GM12878 (cell line): ENCODE measurements at regions of chr14 and their contacts with region 1.

Region 1: GRCh38 chr14:74945823-74946682 is 9.3 kb downstream of the PGF start:
- DNase-seq: no peak
- ATAC-seq: peak; percentile 84
- H3K4me3 ChIP-seq: no peak overlapping the region
- H3K27ac ChIP-seq: no peak overlapping the region
- H3K4me1 ChIP-seq: peaks cover 23% of the 10 kb centered on the region
- H3K27me3 ChIP-seq: no peaks in the 10 kb centered on the region
- CTCF ChIP-seq: peak; percentile 90 to 96 (median 94)
- EP300 ChIP-seq: no peak
- POLR2A ChIP-seq: no peak
- RAD21 ChIP-seq: peak; percentile 87

Region 2: DNA sequence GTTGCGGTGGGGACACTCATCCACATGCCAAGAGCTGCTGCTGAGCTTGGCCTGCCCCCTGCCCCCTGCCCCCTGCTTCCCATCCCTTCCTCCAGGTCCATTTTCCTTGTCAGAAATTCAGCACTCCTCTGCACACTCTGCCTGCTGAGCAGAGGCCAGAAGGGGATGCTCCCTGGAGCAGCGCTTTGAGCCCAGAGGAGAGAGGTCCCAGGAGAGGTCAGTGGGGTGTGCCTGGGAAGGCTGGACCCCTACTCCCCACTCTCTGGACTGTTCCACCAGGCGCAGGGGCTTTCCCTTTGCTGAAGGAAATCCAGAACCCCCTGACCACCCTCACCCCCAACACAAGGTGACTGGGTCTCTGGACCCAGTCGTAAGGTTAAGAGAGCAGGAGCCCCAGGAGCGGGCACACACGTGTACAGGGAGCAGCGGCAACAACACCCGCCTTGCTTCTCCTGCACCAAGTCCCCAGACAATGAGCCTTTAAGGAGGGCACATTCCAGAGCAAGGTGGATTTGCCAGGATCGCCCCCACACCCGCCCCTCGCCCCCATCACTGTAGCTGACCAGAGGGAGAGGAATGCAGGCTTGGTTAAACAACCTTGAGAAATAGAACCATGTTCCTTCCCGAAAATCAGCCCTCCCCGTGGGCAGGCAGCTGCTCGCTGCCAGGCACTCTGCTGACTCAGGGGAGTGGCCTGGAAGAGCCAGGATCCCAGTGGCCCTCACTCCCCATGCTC is 421.8 kb before region 1 on chr14:
- CTCF ChIA-PET with region 1: no interaction called
- POLR2A ChIA-PET with region 1: no interaction called
- RAD21 ChIA-PET with region 1: no interaction called
- SMC1A ChIA-PET with region 1: no interaction called
- in situ Hi-C with region 1: no loop called
- intact Hi-C with region 1: no loop called
- DNase-seq: no peak
- ATAC-seq: no peak
- H3K4me3 ChIP-seq: no peak overlapping the region
- H3K27ac ChIP-seq: no peak overlapping the region
- H3K4me1 ChIP-seq: peaks cover 5% of the 10 kb centered on the region
- H3K27me3 ChIP-seq: no peaks in the 10 kb centered on the region; a peak in 2 of 4 replicates
- CTCF ChIP-seq: no peak
- EP300 ChIP-seq: no peak
- POLR2A ChIP-seq: no peak
- RAD21 ChIP-seq: no peak

Region 3: DNA sequence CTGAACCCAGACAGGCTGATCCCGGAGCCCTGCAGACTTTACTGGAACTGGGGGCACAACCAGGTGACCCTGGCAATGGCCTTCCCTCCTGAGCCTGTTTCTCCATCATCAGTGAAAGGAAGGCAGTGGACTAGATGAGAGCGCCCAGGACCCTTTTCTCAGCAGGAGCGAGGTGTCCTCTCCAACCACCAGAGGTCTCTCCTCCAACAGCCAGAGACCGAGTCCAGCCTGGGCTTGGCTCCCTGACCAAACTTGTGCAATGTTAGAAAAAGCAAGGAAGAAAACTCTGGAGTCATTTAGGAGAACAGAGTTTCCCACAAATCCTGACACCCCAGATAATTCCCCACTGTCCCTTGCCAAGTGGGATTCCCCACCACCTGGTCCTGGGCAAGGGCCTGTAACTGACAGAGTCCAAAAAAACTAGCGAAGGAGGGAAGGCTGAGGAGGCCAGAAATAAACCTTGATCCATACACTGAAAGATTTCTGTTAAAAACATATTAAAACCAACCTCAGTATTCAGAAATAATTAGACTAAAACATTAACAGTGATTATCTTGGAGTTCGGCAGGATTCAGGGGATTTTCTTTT is 32.0 kb before region 1 on chr14:
- CTCF ChIA-PET with region 1: interaction called, 5 read pairs
- POLR2A ChIA-PET with region 1: no interaction called
- RAD21 ChIA-PET with region 1: interaction called, 8 read pairs
- SMC1A ChIA-PET with region 1: interaction called, 3 read pairs
- in situ Hi-C with region 1: no loop called
- intact Hi-C with region 1: loop called (anchors 1 kb)
- DNase-seq: no peak
- ATAC-seq: peak; percentile 88
- H3K4me3 ChIP-seq: no peak overlapping the region
- H3K27ac ChIP-seq: no peak overlapping the region
- H3K4me1 ChIP-seq: no peaks in the 10 kb centered on the region
- H3K27me3 ChIP-seq: no peaks in the 10 kb centered on the region
- CTCF ChIP-seq: peak; percentile 62 to 76 (median 70)
- EP300 ChIP-seq: no peak
- POLR2A ChIP-seq: no peak
- RAD21 ChIP-seq: peak; percentile 76

Region 4: GRCh38 chr14:74934476-74935359 is 11.3 kb before region 1 on chr14:
- CTCF ChIA-PET with region 1: interaction called, 10 read pairs
- POLR2A ChIA-PET with region 1: interaction called, 6 read pairs
- RAD21 ChIA-PET with region 1: interaction called, 5 read pairs
- SMC1A ChIA-PET with region 1: interaction called, 5 read pairs
- in situ Hi-C with region 1: no loop called
- intact Hi-C with region 1: no loop called
- DNase-seq: no peak
- ATAC-seq: peak; percentile 53
- H3K4me3 ChIP-seq: no peak overlapping the region
- H3K27ac ChIP-seq: no peak overlapping the region
- H3K4me1 ChIP-seq: peaks cover 19% of the 10 kb centered on the region
- H3K27me3 ChIP-seq: no peaks in the 10 kb centered on the region
- CTCF ChIP-seq: no peak
- EP300 ChIP-seq: no peak
- POLR2A ChIP-seq: no peak
- RAD21 ChIP-seq: no peak

Region 5: GRCh38 chr14:74963705-74964271 is 17.7 kb after region 1 on chr14:
- CTCF ChIA-PET with region 1: interaction called, 61 read pairs
- POLR2A ChIA-PET with region 1: interaction called, 3 read pairs
- RAD21 ChIA-PET with region 1: interaction called, 6 read pairs
- SMC1A ChIA-PET with region 1: interaction called, 4 read pairs
- in situ Hi-C with region 1: no loop called
- intact Hi-C with region 1: no loop called
- DNase-seq: no peak
- ATAC-seq: peak; percentile 15
- H3K4me3 ChIP-seq: no peak overlapping the region
- H3K27ac ChIP-seq: no peak overlapping the region
- H3K4me1 ChIP-seq: peaks cover 14% of the 10 kb centered on the region
- H3K27me3 ChIP-seq: no peaks in the 10 kb centered on the region
- CTCF ChIP-seq: no peak
- EP300 ChIP-seq: no peak
- POLR2A ChIP-seq: no peak
- RAD21 ChIP-seq: no peak

Region 6: DNA sequence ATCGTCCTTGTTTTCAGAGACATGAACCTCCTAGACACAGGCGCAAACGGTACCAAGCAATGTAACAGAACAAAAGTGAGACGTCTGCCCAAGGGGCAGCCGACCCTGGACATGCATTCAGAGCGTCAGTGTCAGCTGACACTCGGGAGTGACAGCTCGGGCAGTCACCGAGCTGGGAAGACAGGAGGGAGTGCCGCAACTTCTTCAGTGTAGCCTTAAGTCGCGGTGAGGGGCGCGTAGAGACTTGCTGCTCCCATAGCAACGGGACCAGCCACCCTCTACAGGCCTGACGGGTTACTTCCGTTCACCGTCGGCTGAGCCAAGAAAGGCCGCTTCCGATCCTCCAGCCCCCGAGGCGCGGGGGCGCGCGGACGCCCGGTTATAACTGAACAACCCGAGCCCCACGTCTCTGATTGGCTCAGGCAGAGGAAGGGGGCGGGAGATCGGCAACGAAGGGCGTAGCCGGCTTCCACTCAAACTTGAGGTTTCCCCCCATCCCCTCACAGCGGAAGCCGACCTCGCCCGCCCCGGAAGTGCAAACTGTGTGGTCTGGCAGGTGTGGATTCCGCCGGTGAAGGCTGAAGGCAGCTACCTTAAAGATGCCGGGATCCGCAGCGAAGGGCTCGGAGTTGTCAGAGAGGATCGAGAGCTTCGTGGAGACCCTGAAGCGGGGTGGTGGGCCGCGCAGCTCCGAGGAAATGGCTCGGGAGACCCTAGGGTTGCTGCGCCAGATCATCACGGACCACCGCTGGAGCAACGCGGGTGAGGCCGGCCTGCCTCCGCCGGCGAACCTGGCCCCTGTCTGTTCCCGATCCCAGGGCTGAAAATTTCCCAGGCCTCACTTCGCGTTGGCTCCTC is 56.6 kb after region 1 on chr14 and contains the start of gene EIF2B2:
- CTCF ChIA-PET with region 1: interaction called, 20 read pairs
- POLR2A ChIA-PET with region 1: interaction called, 6 read pairs
- RAD21 ChIA-PET with region 1: interaction called, 4 read pairs
- SMC1A ChIA-PET with region 1: interaction called, 4 read pairs
- in situ Hi-C with region 1: no loop called
- intact Hi-C with region 1: loop called (anchors 1 kb)
- DNase-seq: peak; percentile 95
- ATAC-seq: peak; percentile 99
- H3K4me3 ChIP-seq: peak within 1 kb of the TSS; percentile 94
- H3K27ac ChIP-seq: peak within 1 kb of the TSS; percentile 78
- H3K4me1 ChIP-seq: peaks cover 4% of the 10 kb centered on the region
- H3K27me3 ChIP-seq: no peaks in the 10 kb centered on the region
- CTCF ChIP-seq: peak in 1 of 3 experiments; percentile 23; a peak in 1 of 6 replicates
- EP300 ChIP-seq: no peak; a peak in 1 of 4 replicates
- POLR2A ChIP-seq: peak; percentile 82
- RAD21 ChIP-seq: no peak
- polyA plus RNA-seq, gene EIF2B2: 17.4 to 32.3 TPM

Region 7: DNA sequence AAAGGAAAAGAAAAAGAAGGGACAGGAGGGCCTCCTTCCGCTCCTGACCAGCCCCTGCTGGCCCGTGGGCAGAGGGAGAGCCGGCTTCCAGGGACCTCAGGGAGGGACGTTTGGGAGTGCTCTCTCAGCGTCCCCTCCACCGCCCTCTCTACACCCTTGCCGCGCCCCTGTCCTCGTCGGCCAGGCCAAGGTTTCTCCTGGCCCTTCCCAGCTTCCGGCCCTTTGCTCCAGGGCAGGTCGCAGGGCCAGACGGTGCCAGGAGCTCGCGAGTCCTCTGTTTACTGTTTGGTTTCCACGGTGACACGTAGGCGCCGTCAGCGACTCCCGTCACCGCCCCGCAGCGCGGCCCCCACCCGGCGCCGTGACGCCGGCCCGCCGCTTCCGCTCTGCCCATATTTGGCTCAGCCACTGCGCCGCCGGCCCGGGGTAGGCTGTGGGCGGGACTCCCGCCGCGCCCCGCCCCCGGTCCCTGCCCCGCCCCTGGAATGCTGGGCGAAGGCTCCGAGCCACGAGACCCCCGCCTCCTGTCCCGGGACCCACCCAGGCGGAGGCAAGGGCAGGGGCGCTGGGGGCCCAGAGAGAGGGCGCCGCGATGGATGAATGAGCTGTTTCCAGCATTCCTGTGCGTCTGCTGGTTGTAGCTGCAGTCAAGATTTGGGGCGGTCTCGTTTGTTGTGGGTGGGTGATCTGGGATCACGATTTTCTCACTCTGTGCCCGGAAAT is 348.0 kb after region 1 on chr14:
- CTCF ChIA-PET with region 1: interaction called, 12 read pairs
- POLR2A ChIA-PET with region 1: no interaction called
- RAD21 ChIA-PET with region 1: interaction called, 3 read pairs
- SMC1A ChIA-PET with region 1: no interaction called
- in situ Hi-C with region 1: no loop called
- intact Hi-C with region 1: no loop called
- DNase-seq: no peak
- ATAC-seq: peak; percentile 99
- H3K4me3 ChIP-seq: peak overlapping the region; percentile 72
- H3K27ac ChIP-seq: no peak overlapping the region
- H3K4me1 ChIP-seq: peaks cover 17% of the 10 kb centered on the region
- H3K27me3 ChIP-seq: no peaks in the 10 kb centered on the region; a peak in 1 of 4 replicates
- CTCF ChIP-seq: no peak
- EP300 ChIP-seq: peak in 1 of 2 experiments; percentile 72; a peak in 2 of 4 replicates
- POLR2A ChIP-seq: no peak
- RAD21 ChIP-seq: no peak